CD4-positive, alpha-beta memory T cell (primary cell): ENCODE measurements at regions of chr2 and their contacts with region 1.

Region 1: DNA sequence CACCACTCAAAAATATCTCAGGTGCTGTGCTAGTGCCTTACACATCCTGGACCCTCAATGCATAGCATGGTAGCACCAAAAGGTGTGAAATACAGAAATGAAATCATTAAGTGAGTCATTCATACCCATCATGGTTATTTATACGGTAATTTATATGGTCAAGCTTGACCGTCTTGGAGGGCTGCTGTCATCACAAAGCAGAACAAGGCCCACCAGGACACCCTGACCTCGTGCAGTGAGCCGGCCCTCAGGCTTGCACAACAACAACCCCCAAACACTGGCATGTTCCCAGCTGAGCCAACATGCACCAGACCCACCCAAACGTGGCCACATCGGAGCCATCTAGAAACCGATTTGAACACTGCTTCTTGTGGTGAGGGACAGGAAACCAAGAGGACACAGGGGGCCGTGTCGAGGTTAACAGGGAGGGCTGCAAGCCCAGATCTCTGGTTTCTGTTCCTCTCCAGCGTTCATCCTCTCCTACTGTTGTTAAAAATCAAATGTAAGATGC is 378.5 kb upstream of the ID2 start:
- DNase-seq: peak; percentile 72 to 82 (median 76)
- H3K4me3 ChIP-seq: peak overlapping the region; percentile 33 to 40
- H3K4me3 Mint-ChIP-seq: peak overlapping the region; percentile 7 to 83 (median 77)
- H3K27ac ChIP-seq: no peak overlapping the region
- H3K27ac Mint-ChIP-seq: peak overlapping the region; percentile 73 to 90 (median 83)
- H3K4me1 ChIP-seq: peaks cover 70% of the 10 kb centered on the region
- H3K4me1 Mint-ChIP-seq: peaks cover 48 to 86% (median 67%) of the 10 kb centered on the region in 4 donors
- H3K27me3 ChIP-seq: no peaks in the 10 kb centered on the region
- H3K27me3 Mint-ChIP-seq: no peaks in the 10 kb centered on the region

Region 2: DNA sequence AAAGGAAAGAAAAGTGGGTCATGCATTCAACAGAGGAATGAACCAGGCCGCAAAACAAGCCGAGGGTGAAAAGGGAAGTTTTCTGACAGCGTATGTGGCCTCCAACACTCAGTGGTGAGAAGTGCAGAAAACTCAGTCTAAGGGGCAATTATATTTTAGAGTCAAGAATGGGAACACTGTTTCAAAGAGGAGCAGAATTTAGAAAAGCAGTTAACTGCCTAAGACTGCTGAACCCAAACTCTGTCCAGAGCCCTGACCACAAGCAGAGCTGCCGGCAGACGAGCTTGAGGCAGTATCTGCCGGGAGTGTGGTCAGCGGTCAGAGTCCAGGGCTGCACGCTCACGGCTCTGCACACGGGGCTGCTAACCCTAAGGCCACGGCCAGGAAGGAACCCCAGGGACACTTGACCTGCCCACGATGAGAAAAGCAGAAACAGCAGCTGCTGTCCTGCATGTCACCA is 31.5 kb after region 1 on chr2:
- CTCF ChIA-PET with region 1: interaction called, 3 read pairs
- POLR2A ChIA-PET with region 1: interaction called, 4 read pairs
- intact Hi-C with region 1: loop called (anchors 5 kb)
- DNase-seq: no peak
- H3K4me3 ChIP-seq: no peak overlapping the region
- H3K4me3 Mint-ChIP-seq: peak overlapping the region in 7 of 8 donors; percentile 2 to 76 (median 56)
- H3K27ac ChIP-seq: no peak overlapping the region
- H3K27ac Mint-ChIP-seq: peak overlapping the region in 5 of 7 donors; percentile 28 to 86 (median 74)
- H3K4me1 ChIP-seq: peaks cover 47% of the 10 kb centered on the region
- H3K4me1 Mint-ChIP-seq: peaks cover 23 to 72% (median 36%) of the 10 kb centered on the region in 4 donors
- H3K27me3 ChIP-seq: no peaks in the 10 kb centered on the region
- H3K27me3 Mint-ChIP-seq: no peaks in the 10 kb centered on the region